PC-9 (cell line): ENCODE measurements at regions of chr2 and their contacts with region 1.

Region 1: GRCh38 chr2:196639180-196640030 is at the start of gene CCDC150:
- DNase-seq: peak; percentile 81 to 90
- H3K4me3 ChIP-seq: peak within 1 kb of the TSS; percentile 91
- H3K27ac ChIP-seq: no peak within 1 kb of the TSS
- H3K4me1 ChIP-seq: peaks cover 8% of the 10 kb centered on the region
- H3K27me3 ChIP-seq: no peaks in the 10 kb centered on the region
- CTCF ChIP-seq: no peak; the same call in 1 of the 2 replicates
- total RNA-seq, gene CCDC150: 9.8 and 17.8 TPM in 2 replicates

Region 2: DNA sequence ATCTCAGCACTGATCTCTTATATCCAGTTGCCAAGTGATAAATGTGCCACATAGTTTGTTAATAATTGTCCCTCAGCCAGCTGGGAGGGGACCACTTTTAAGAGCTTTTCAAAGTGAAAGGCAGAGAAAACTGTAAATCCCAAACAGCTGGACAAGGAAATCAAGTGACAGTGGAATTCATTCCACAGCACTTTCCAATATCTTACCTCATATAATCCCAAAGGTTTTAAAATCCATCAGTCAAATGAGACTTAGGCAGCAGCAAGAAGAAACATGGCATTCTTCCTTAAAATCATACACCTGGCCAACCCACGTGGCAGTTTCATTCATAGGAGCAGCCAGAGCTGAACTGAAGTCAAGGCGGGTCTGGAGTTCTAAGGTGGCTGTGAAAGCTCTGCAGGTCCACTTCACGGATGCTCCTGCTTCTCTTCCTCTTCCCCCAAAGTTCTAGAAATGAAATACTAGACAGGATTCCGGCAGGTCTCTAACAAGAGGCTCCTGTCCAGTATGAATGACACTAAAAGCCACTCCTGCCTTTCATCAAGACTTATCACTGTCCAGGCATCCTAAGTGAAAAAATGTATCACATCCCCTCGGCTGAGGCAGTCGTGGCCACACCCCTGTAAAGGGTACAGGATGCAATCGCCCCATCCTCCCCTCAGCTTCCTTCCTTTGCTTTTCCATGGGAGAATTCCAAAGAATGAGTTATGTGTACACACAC is 277.6 kb before region 1 on chr2:
- CTCF ChIA-PET with region 1: interaction called, 13 read pairs
- POLR2A ChIA-PET with region 1: no interaction called
- intact Hi-C with region 1: no loop called
- DNase-seq: no peak
- H3K4me3 ChIP-seq: no peak overlapping the region
- H3K27ac ChIP-seq: no peak overlapping the region
- H3K4me1 ChIP-seq: no peaks in the 10 kb centered on the region
- H3K27me3 ChIP-seq: no peaks in the 10 kb centered on the region
- CTCF ChIP-seq: no peak

Region 3: DNA sequence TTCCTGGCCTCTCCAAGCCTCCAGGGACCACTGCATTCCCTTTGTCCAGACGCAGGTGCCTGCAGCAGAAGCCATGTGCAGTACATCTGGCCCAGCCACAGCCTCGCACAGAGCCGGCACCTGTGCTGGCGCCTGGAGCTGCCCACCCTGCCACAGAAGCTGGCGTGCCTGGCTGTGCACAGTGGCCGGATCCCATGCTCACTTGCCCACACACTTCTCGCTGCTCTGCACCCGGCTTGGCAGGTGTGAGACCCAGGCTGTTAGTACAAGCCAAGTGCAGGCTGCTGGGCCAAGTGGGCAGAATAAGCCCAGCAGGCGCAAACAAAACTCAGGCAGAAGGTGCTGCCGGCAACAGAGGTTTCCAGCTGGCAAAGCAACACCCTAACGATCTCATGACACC is 124.4 kb before region 1 on chr2:
- CTCF ChIA-PET with region 1: no interaction called
- POLR2A ChIA-PET with region 1: no interaction called
- intact Hi-C with region 1: no loop called
- DNase-seq: no peak
- H3K4me3 ChIP-seq: no peak overlapping the region
- H3K27ac ChIP-seq: no peak overlapping the region
- H3K4me1 ChIP-seq: no peaks in the 10 kb centered on the region
- H3K27me3 ChIP-seq: no peaks in the 10 kb centered on the region
- CTCF ChIP-seq: no peak

Region 4: DNA sequence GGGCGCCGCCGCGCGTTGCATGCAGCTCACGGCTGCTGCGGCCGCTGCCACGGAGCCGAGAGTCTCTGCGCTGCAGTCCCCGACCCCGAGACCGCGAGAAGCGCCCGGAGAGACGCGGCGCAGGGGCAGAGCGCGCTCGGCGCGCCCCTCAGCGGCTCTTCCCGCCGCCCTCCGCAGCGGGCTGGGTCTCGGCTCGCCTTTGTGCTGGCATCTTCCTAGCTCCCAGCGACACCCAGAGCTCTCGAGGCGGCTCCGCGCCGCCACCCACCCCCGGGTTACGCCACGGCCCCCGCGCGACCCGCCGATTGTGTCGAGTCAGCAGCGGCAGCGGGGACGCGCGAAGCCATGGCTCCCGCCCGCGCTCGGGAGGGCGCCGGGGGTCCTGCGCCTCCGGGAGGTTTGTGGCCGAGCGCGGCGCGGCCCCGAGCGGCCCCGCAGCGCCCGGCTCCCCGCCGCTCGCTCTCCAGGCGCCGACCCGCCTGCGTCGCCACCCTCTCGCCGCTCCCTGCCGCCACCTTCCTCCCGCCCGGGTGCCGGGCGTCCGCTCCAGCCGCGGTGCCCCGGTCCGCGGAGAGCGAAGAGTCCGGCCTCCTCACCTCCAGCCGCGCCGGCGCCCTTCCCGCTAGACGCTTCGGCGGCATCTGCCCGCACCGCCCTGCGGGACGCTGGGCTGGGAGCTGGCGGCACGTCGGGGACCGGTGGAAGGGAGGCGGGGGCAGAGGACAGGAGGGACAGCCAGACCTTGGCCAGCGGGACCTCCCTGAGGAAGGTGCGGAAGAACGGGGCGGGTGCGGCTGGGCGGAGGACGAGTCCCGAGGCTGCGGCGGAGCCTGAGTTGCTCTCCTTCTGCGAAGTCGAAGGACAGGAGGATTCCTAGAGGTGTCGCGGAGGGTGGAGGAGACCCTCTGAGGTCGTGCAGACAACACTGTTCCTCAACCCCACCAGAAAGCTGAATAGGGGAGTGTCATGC is 46.2 kb before region 1 on chr2:
- CTCF ChIA-PET with region 1: no interaction called
- POLR2A ChIA-PET with region 1: no interaction called
- intact Hi-C with region 1: loop called (anchors 2 kb)
- DNase-seq: peak in 1 of 2 experiments; percentile 23
- H3K4me3 ChIP-seq: peak within 1 kb of the TSS; percentile 62
- H3K27ac ChIP-seq: no peak within 1 kb of the TSS
- H3K4me1 ChIP-seq: no peaks in the 10 kb centered on the region
- H3K27me3 ChIP-seq: peaks cover 19% of the 10 kb centered on the region; the same call in 1 of the 2 replicates
- CTCF ChIP-seq: no peak